GM10248 (cell line): ENCODE measurements at regions of chr10 and their contacts with region 1.

Region 1: GRCh38 chr10:93503075-93503474 is 6.7 kb downstream of the CEP55 start:
- DNase-seq: peak; percentile 25
- CTCF ChIP-seq: no peak

Region 2: GRCh38 chr10:93515071-93516005 is 12.3 kb after region 1 on chr10:
- CTCF ChIA-PET with region 1: interaction called, 45 read pairs
- POLR2A ChIA-PET with region 1: interaction called, 3 read pairs
- DNase-seq: no peak
- CTCF ChIP-seq: no peak

Region 3: DNA sequence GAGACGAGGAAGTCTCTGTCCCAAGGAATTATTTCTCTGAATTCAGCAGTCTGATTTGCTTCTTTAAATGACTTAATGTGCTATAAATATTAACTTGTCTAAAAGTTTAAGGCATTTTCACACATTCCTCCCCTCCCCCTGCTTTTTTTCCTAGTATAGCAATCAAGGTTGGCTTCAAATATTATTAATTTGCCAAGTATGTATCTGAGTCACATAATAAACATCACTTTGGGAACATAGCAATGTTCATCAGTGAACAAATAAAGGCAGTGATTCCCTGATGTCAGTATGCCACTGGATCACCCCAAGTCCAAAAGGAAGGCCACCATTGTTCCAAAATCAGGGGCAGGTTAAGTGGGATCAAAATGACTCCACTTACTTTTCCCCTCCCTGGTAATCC is 149.8 kb after region 1 on chr10:
- CTCF ChIA-PET with region 1: no interaction called
- POLR2A ChIA-PET with region 1: no interaction called
- DNase-seq: no peak
- CTCF ChIP-seq: no peak